ENCODE measurements at regions of chr15 and their contacts with region 1.

Region 1: GRCh38 chr15:65184868-65185738 is at the start of gene CLPX:
- DNase-seq: peak; percentile 94 to 98 (median 97)
- ATAC-seq: peak; percentile 91
- H3K4me3 ChIP-seq: peak within 1 kb of the TSS; percentile 70
- H3K27ac ChIP-seq: peak within 1 kb of the TSS; percentile 86
- H3K4me1 ChIP-seq: peaks cover 10 to 12% of the 10 kb centered on the region in 2 experiments; a peak in 4 of 5 replicates
- H3K27me3 ChIP-seq: no peaks in the 10 kb centered on the region
- CTCF ChIP-seq: no peak
- EP300 ChIP-seq: no peak
- POLR2A ChIP-seq: peak; percentile 79
- RAD21 ChIP-seq: no peak
- polyA plus RNA-seq, gene CLPX: 11.2 to 13.4 TPM

Region 2: DNA sequence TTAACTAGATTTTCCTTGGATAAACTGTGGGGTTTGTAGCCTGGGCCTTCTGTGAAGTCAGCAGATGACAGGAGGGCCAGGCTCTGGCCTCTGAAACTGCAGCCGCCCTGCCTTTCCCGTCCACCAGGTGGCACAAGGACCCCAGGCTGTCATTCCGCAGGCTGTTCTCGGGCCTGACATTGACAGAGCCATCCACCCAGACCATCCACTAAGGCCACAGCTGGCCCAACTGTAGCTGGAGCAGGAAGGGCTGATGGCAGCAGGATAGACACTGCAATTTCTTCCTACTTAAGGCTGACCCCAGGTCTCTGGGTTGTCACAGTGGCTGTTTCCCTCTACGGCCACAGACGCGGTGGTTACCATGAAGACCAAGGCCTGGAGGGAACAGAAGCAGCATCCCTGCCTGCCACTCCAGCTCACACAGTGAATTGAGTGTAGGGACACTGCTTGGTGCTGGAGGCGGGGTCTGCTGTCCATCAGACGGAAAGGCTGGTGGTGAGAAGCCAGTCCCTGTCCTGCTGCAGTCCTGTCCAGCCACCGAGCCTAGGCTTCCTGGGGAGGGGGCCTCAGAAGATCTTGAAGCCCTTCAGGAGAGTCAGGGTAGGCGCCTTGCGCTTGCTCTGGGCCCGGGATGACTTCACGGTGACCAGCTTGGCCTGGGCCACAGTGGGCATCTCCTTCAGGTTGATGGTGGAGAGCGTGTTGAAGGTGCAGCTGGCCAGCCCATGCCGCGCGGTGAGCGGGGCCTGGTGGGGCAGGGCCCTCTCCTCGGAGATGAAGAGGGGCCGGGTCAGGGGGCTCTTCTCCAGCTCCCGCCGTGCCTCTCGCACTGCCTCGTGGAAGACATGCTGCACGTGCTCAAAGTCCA is 130.5 kb before region 1 on chr15:
- CTCF ChIA-PET with region 1: no interaction called
- POLR2A ChIA-PET with region 1: no interaction called
- in situ Hi-C with region 1: no loop called
- intact Hi-C with region 1: loop called (anchors 5 kb)
- DNase-seq: peak; percentile 76 to 81 (median 80)
- ATAC-seq: peak; percentile 92
- H3K4me3 ChIP-seq: no peak overlapping the region
- H3K27ac ChIP-seq: no peak overlapping the region
- H3K4me1 ChIP-seq: peaks cover 5 to 11% of the 10 kb centered on the region in 2 experiments; a peak in 3 of 5 replicates
- H3K27me3 ChIP-seq: peaks cover 0 to 16% of the 10 kb centered on the region in 2 experiments; a peak in 3 of 5 replicates
- CTCF ChIP-seq: peak; percentile 93 to 94 (median 93)
- EP300 ChIP-seq: no peak
- POLR2A ChIP-seq: no peak
- RAD21 ChIP-seq: peak; percentile 72 to 93

Region 3: GRCh38 chr15:65286704-65287519 is 101.8 kb after region 1 on chr15 and contains the start of gene PARP16:
- CTCF ChIA-PET with region 1: no interaction called
- POLR2A ChIA-PET with region 1: interaction called, 11 read pairs
- in situ Hi-C with region 1: no loop called
- intact Hi-C with region 1: no loop called
- DNase-seq: peak; percentile 85 to 94 (median 92)
- ATAC-seq: peak; percentile 98
- H3K4me3 ChIP-seq: peak within 1 kb of the TSS; percentile 53
- H3K27ac ChIP-seq: peak within 1 kb of the TSS; percentile 68
- H3K4me1 ChIP-seq: peaks cover 10 to 17% of the 10 kb centered on the region in 2 experiments; a peak in 4 of 5 replicates
- H3K27me3 ChIP-seq: no peaks in the 10 kb centered on the region
- CTCF ChIP-seq: peak in 2 of 3 experiments; percentile 56 to 67; a peak in 3 of 6 replicates
- EP300 ChIP-seq: no peak
- POLR2A ChIP-seq: peak; percentile 69
- RAD21 ChIP-seq: no peak
- polyA plus RNA-seq, gene PARP16: 3.0 to 5.6 TPM

Region 4: GRCh38 chr15:65298731-65299130 is 113.6 kb after region 1 on chr15:
- CTCF ChIA-PET with region 1: interaction called, 19 read pairs
- POLR2A ChIA-PET with region 1: interaction called, 36 read pairs
- in situ Hi-C with region 1: loop called (anchors 5 kb)
- intact Hi-C with region 1: loop called (anchors 1 kb)
- DNase-seq: no peak
- ATAC-seq: no peak
- H3K4me3 ChIP-seq: no peak overlapping the region
- H3K27ac ChIP-seq: no peak overlapping the region
- H3K4me1 ChIP-seq: peaks cover 17% of the 10 kb centered on the region in 2 experiments; a peak in 4 of 5 replicates
- H3K27me3 ChIP-seq: no peaks in the 10 kb centered on the region
- CTCF ChIP-seq: no peak
- EP300 ChIP-seq: no peak
- POLR2A ChIP-seq: no peak
- RAD21 ChIP-seq: no peak

Measured in K562 (cell line).